Colonic mucosa (tissue), 4 donors: ENCODE measurements at regions of chr3 and their contacts with region 1.

Region 1: DNA sequence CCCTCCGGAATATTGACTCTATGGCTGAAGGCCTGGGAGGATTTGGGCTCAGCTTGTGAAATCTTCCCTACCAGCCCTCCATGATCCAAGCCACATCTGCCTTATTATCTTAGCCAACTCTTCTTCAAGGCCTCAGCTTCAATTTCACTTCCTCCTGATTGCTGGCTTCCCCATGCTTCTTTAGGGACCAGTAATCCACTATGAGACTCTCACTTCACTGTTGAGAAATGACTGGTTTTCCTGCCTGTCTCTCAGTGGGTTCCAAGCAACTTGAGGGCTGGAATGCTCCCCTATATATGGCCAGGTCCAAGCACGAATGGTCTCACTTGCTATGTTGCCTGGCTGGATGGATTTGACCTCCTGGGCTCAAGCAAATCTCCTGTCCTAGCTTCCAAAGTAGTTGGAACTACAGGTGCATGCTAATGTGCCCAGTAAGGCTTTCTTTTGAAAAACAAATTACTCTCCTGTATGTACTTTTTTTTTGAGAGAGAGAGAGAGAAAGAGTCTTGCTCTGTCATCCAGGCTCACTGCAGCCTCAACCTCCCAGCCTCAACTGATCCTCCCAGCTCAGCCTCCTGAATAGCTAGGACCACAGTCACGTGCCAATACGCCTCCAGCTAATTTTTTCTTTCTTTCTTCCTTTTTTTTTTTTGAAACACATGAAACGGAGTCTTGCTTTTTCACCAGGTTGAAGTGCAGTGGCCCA is 7.9 kb upstream of the PIK3CB start:
- DNase-seq: no peak
- H3K4me3 ChIP-seq: no peak overlapping the region
- H3K27ac ChIP-seq: no peak overlapping the region
- H3K4me1 ChIP-seq: no peaks in the 10 kb centered on the region
- H3K27me3 ChIP-seq: no peaks in the 10 kb centered on the region
- CTCF ChIP-seq: no peak

Region 2: GRCh38 chr3:138915503-138916498 is 73.2 kb after region 1 on chr3:
- intact Hi-C with region 1: loop called (anchors 5 kb)
- DNase-seq: peak; percentile 95
- H3K4me3 ChIP-seq: peak overlapping the region; percentile 78
- H3K27ac ChIP-seq: peak overlapping the region; percentile 92
- H3K4me1 ChIP-seq: no peaks in the 10 kb centered on the region
- H3K27me3 ChIP-seq: no peaks in the 10 kb centered on the region
- CTCF ChIP-seq: peak; percentile 79